ENCODE measurements at regions of chr3 and their contacts with region 1.

Region 1: DNA sequence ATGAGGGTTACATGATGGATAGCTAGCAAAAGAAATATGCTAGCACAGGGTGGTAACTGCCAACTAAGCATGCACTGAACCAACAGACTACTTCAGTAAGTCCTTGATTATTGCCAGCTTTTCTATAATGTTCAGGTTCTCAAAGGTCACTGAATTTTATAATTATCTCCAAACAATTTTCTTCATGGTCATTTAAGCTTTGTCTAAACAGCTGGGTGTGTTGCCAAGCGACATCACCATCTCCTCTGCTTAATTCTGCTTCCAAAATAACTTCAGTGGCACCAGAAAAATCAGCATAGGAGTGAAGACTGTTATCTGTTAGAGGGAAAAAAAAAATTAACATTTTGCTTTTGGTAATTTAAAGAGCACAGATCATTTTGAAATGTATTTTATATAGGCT is 54.6 kb upstream of the TOP2B start:
- DNase-seq: no peak
- H3K4me3 ChIP-seq: no peak overlapping the region
- H3K27ac ChIP-seq: no peak overlapping the region
- H3K4me1 ChIP-seq: peaks cover 7% of the 10 kb centered on the region
- H3K27me3 ChIP-seq: no peaks in the 10 kb centered on the region
- CTCF ChIP-seq: no peak

Region 2: GRCh38 chr3:25293731-25294130 is 425.6 kb before region 1 on chr3:
- CTCF ChIA-PET with region 1: no interaction called
- POLR2A ChIA-PET with region 1: no interaction called
- intact Hi-C with region 1: loop called (anchors 5 kb)
- DNase-seq: peak; percentile 27 to 46
- H3K4me3 ChIP-seq: no peak overlapping the region
- H3K27ac ChIP-seq: no peak overlapping the region
- H3K4me1 ChIP-seq: 0 out of 2 replicates have a peak, but pooled peaks cover 4% of the 10 kb centered on the region
- H3K27me3 ChIP-seq: no peaks in the 10 kb centered on the region
- CTCF ChIP-seq: no peak

Region 3: GRCh38 chr3:25664810-25665314 is 54.5 kb before region 1 on chr3 and contains the start of gene TOP2B:
- CTCF ChIA-PET with region 1: no interaction called
- POLR2A ChIA-PET with region 1: no interaction called
- intact Hi-C with region 1: loop called (anchors 5 kb)
- DNase-seq: peak; percentile 82 to 92
- H3K4me3 ChIP-seq: peak within 1 kb of the TSS; percentile 89
- H3K27ac ChIP-seq: peak within 1 kb of the TSS; percentile 64
- H3K4me1 ChIP-seq: peaks cover 17% of the 10 kb centered on the region
- H3K27me3 ChIP-seq: no peaks in the 10 kb centered on the region
- CTCF ChIP-seq: no peak
- total RNA-seq, gene TOP2B: 80.1 and 106 TPM in 2 replicates

Region 4: GRCh38 chr3:26104851-26105251 is 385.5 kb after region 1 on chr3:
- CTCF ChIA-PET with region 1: no interaction called
- POLR2A ChIA-PET with region 1: no interaction called
- intact Hi-C with region 1: no loop called
- DNase-seq: no peak
- H3K4me3 ChIP-seq: no peak overlapping the region
- H3K27ac ChIP-seq: no peak overlapping the region
- H3K4me1 ChIP-seq: no peaks in the 10 kb centered on the region
- H3K27me3 ChIP-seq: no peaks in the 10 kb centered on the region
- CTCF ChIP-seq: no peak

Measured in PC-9 (cell line).